Right ventricle myocardium superior (tissue), 1 donor: ENCODE measurements at regions of chr7 and their contacts with region 1.

Region 1: DNA sequence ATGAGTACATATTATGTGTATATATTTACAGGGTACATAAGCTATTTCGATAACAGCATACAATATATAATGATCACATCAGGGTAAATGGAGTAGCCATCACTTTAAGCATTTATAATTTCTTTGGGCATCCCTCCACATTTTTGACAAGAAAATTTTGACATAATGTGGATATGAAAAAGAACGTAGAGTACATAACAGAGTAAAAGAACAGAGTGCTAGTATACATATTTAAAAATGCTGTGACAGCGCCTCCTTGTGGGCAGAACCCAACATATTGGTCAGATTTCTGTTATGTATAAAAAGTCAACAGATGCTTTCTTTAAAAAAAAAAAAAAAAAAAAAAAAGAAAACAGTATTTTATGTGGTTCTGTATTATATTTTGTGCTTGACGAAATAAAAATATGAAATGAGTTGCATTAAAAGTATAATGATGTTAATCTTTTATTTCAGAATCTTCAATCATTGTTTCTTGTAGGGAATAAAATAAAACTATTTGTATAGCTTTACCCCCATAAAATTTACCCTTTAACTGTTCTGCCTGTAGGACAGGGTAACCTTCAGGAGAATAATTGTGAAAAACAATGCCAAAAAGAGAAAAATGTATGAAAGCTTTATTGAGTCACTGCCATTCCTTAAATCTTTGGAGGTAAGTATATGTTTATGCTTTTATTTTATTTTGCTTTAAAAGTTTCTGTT is 18.3 kb upstream of the HBP1 start:
- DNase-seq: peak; percentile 81
- ATAC-seq: peak; percentile 87

Region 2: GRCh38 chr7:106793015-106793975 is 357.2 kb before region 1 on chr7:
- intact Hi-C with region 1: loop called (anchors 5 kb)
- DNase-seq: no peak
- ATAC-seq: peak; percentile 48

Region 3: DNA sequence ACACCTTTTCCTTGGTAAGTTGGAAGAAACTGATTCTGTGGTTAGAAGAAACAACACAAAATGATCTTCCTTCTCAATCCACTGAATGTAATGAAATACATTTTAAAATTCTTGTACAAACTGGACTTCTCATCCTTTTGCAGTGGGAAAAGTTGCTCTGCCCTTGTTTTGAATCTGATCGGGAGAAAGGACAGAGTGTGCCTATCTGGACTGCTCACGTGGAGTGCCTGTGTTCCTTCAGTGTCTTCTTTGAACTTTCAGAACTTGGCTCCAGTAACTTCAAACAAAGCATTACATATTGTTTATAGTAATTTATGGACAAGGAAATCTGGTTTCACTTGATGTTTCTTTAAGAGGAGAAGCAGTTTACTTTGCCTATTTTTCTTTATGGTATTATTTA is 635.4 kb after region 1 on chr7:
- intact Hi-C with region 1: no loop called
- DNase-seq: no peak
- ATAC-seq: peak; percentile 31